A549 (cell line): ENCODE measurements at regions of chr7 and their contacts with region 1.

Region 1: GRCh38 chr7:77455324-77455723 is 39.2 kb upstream of the GSAP start:
- DNase-seq: peak; percentile 68 to 82
- ATAC-seq: peak; percentile 89 to 96
- H3K4me3 ChIP-seq: peak overlapping the region; percentile 8; the same call in 1 of the 3 replicates
- H3K27ac ChIP-seq: peak overlapping the region; percentile 73 to 83
- H3K4me1 ChIP-seq: peaks cover 78% of the 10 kb centered on the region
- CTCF ChIP-seq: no peak
- EP300 ChIP-seq: no peak; a peak in 1 of 5 replicates
- POLR2A ChIP-seq: no peak
- RAD21 ChIP-seq: 0 out of 5 replicates have a peak, but pooled peaks of 1 of the 2 experiments have one; percentile 31

Region 2: DNA sequence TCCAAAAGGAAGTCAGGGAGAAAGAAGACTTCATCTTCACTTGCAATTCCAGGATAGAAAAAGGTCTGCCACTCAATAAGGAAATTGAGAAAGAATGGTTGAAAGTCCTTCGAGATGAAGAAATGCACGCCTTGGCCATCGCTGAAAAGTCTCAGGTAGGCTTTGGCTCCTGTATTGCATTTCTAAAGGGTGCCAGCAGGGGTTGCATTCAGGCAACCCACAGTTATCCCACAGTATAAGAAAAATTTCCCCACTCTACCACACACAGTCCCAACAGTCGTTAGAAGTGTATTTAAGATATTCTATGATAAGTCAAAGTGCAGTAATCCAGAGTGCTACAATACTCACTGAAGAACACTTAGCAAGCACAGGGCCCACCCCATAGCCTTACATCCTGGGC is 162.3 kb before region 1 on chr7:
- CTCF ChIA-PET with region 1: no interaction called
- POLR2A ChIA-PET with region 1: no interaction called
- DNase-seq: no peak
- ATAC-seq: peak; percentile 39 to 58; a peak in 3 of 6 replicates
- H3K4me3 ChIP-seq: no peak overlapping the region
- H3K27ac ChIP-seq: no peak overlapping the region
- H3K4me1 ChIP-seq: no peaks in the 10 kb centered on the region
- CTCF ChIP-seq: no peak
- EP300 ChIP-seq: no peak
- POLR2A ChIP-seq: no peak
- RAD21 ChIP-seq: no peak

Region 3: GRCh38 chr7:77399816-77400215 is 55.5 kb before region 1 on chr7:
- CTCF ChIA-PET with region 1: no interaction called
- POLR2A ChIA-PET with region 1: no interaction called
- DNase-seq: no peak
- ATAC-seq: no peak
- H3K4me3 ChIP-seq: no peak overlapping the region
- H3K27ac ChIP-seq: no peak overlapping the region
- H3K4me1 ChIP-seq: peaks cover 9% of the 10 kb centered on the region; the same call in 2 of the 3 replicates
- CTCF ChIP-seq: no peak
- EP300 ChIP-seq: no peak
- POLR2A ChIP-seq: no peak
- RAD21 ChIP-seq: no peak

Region 4: GRCh38 chr7:77479536-77480088 is 24.3 kb after region 1 on chr7:
- CTCF ChIA-PET with region 1: interaction called, 4 read pairs
- POLR2A ChIA-PET with region 1: interaction called, 12 read pairs
- DNase-seq: peak; percentile 33 to 93
- ATAC-seq: peak; percentile 93 to 98
- H3K4me3 ChIP-seq: no peak overlapping the region; the same call in 2 of the 3 replicates
- H3K27ac ChIP-seq: peak overlapping the region; percentile 85 to 93
- H3K4me1 ChIP-seq: peaks cover 66% of the 10 kb centered on the region
- CTCF ChIP-seq: no peak
- EP300 ChIP-seq: peak; percentile 92 to 93; a peak in 4 of 5 replicates
- POLR2A ChIP-seq: no peak
- RAD21 ChIP-seq: peak in 1 of 2 experiments; percentile 60; a peak in 3 of 5 replicates